ENCODE measurements at regions of chr9 and their contacts with region 1.

Region 1: DNA sequence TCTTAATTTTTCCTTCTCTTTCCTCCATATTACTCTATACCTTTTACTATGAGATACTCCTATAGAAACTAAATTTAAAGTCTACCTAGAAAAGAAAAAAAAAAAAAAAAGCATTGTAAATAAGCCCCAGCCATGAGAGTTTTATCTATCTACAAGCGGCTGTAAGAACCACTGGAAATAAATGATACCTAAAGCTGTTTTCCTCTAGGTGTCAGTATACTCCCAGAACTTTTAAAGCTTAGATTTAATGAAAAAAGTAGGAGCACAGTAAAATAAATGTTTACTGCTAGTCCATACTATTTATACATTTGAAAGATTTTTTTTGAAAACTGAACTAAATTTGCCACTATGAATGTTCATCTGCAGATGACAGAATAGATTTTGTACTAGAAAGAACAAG is 26.2 kb downstream of the TYRP1 start:
- DNase-seq: peak in 1 of 2 experiments; percentile 58
- ATAC-seq: peak; percentile 58 to 77; a peak in 3 of 6 replicates
- H3K4me3 ChIP-seq: no peak overlapping the region
- H3K27ac ChIP-seq: no peak overlapping the region
- H3K4me1 ChIP-seq: peaks cover 15% of the 10 kb centered on the region; the same call in 2 of the 3 replicates
- CTCF ChIP-seq: peak; percentile 78
- EP300 ChIP-seq: no peak
- POLR2A ChIP-seq: no peak
- RAD21 ChIP-seq: peak; percentile 77 to 86

Region 2: DNA sequence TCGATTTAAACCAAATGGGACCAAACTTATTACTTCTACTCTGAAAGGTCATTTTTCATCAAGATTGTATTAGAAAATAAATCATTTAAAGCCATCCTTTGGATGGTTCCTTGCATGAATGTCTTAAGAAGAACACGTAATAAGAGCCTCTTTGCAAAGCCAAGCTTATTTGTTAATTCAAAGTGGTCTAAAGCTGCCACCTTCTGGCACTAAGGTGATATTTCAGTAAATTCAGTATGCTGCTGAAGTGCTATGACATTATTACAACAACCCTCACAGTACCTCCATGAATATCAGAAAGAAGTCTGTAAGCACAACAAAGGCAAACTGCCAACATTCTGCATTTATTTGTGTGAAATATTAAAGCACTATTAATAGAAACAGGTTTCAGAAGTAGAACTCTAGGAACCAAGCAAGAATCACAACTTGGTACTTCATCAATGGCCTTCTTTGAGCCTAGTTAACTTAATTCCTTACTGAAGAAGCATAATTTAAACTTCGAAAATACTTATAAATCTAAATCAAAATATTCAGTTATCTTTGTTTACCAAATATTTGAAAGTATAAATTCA is 79.3 kb before region 1 on chr9:
- CTCF ChIA-PET with region 1: no interaction called
- POLR2A ChIA-PET with region 1: no interaction called
- DNase-seq: peak; percentile 4 to 68
- ATAC-seq: peak; percentile 85 to 86
- H3K4me3 ChIP-seq: no peak overlapping the region
- H3K27ac ChIP-seq: no peak overlapping the region
- H3K4me1 ChIP-seq: no peaks in the 10 kb centered on the region
- CTCF ChIP-seq: peak; percentile 60
- EP300 ChIP-seq: no peak
- POLR2A ChIP-seq: no peak
- RAD21 ChIP-seq: peak; percentile 74 to 77

Region 3: GRCh38 chr9:12732971-12733370 is 13.5 kb after region 1 on chr9:
- CTCF ChIA-PET with region 1: interaction called, 22 read pairs
- POLR2A ChIA-PET with region 1: no interaction called
- DNase-seq: no peak
- ATAC-seq: no peak
- H3K4me3 ChIP-seq: no peak overlapping the region
- H3K27ac ChIP-seq: no peak overlapping the region
- H3K4me1 ChIP-seq: no peaks in the 10 kb centered on the region
- CTCF ChIP-seq: no peak
- EP300 ChIP-seq: no peak
- POLR2A ChIP-seq: no peak
- RAD21 ChIP-seq: no peak

Region 4: DNA sequence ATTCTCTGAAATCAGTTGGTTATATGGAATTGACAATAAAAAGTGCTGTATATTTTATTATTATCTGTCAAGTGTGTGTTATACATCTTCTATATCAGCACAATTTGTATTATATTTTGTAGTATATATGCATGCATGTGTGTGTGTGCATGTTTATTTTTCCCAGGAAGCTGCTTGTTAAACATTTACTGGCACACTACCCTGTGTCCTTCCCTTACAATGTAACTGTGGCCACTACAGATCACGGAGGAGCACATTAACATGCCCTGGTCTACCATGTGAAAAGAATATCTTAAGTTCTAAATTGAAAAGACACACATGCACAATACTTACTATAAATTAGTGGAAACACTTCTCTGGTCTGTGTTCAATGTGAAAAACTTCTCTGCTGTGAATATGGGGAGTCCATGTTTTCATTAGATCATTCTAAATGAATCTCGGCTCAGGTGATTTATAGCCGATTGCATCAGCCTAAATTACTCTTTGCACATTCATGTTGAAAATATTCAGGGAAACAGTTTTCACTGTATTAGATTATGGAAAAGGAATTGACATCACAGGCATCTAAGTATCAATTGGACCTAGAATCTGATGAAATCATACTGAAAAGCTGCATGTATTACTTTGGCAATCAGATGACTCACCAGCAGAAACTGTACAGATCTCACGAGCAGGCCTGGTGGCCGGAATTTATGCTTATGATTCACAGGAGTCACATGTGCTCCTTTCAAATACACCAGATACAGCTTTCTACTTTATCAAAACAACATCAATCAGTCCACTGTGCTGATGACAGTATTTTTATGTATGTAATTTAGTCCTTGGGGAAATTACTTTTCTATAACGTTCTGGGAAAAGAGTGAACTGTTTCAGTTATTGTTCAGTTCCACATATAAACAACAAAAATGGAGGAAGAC is 94.8 kb after region 1 on chr9:
- CTCF ChIA-PET with region 1: interaction called, 11 read pairs
- POLR2A ChIA-PET with region 1: interaction called, 4 read pairs
- DNase-seq: peak; percentile 71 to 96
- ATAC-seq: peak; percentile 79 to 82
- H3K4me3 ChIP-seq: peak overlapping the region; percentile 21; the same call in 2 of the 3 replicates
- H3K27ac ChIP-seq: peak overlapping the region; percentile 93 to 94
- H3K4me1 ChIP-seq: peaks cover 77% of the 10 kb centered on the region
- CTCF ChIP-seq: peak; percentile 6; the same call in 1 of the 3 replicates
- EP300 ChIP-seq: peak; percentile 98 to 99; a peak in 4 of 5 replicates
- POLR2A ChIP-seq: no peak
- RAD21 ChIP-seq: peak; percentile 14 to 59

Region 5: DNA sequence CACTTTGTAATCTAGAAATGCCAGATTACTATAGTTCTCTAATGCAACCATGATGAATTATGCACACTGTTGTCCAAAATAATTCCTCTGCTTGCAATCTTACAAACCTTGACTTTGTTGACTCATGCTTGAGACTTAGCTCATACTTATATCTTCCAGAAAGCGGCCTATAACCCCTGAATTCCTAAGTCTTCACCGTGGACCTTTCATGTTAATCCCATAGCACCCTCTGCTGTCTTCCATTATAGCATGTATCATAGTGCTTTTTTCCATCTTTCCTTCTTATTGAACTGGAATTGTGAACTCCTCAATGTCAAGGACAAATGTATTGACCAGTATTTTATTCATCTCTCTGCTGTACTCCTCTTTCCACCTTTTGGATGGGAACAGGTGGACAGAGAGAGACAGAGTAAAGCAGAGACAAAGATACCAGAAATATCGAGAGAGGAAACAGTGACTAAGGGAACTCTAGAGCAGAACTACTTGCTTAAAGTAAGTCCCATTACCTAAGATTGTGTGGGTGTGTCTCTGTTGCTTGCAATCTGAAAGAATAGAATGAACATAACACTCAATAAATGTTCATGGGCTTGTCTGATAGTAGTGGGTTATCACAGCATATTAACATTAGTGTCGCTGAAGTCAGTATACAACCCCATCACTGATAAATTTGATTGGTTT is 165.4 kb after region 1 on chr9:
- CTCF ChIA-PET with region 1: interaction called, 83 read pairs
- POLR2A ChIA-PET with region 1: no interaction called
- DNase-seq: peak; percentile 32 to 86
- ATAC-seq: peak; percentile 97 to 99
- H3K4me3 ChIP-seq: no peak overlapping the region
- H3K27ac ChIP-seq: peak overlapping the region; percentile 31 to 59; a peak in 4 of 6 replicates
- H3K4me1 ChIP-seq: peaks cover 33% of the 10 kb centered on the region; the same call in 2 of the 3 replicates
- CTCF ChIP-seq: peak; percentile 89
- EP300 ChIP-seq: no peak
- POLR2A ChIP-seq: no peak
- RAD21 ChIP-seq: peak; percentile 98 to 99

Region 6: GRCh38 chr9:13088720-13089427 is 369.4 kb after region 1 on chr9:
- CTCF ChIA-PET with region 1: interaction called, 40 read pairs
- POLR2A ChIA-PET with region 1: interaction called, 4 read pairs
- DNase-seq: peak; percentile 57 to 70
- ATAC-seq: peak; percentile 86 to 91
- H3K4me3 ChIP-seq: 0 out of 3 replicates have a peak overlapping the region, but pooled peaks have one; percentile 11
- H3K27ac ChIP-seq: no peak overlapping the region
- H3K4me1 ChIP-seq: no peaks in the 10 kb centered on the region
- CTCF ChIP-seq: peak; percentile 89
- EP300 ChIP-seq: no peak
- POLR2A ChIP-seq: no peak
- RAD21 ChIP-seq: peak; percentile 78 to 84

Measured in A549 (cell line).